ENCODE measurements at regions of chrX and their contacts with region 1.

Region 1: DNA sequence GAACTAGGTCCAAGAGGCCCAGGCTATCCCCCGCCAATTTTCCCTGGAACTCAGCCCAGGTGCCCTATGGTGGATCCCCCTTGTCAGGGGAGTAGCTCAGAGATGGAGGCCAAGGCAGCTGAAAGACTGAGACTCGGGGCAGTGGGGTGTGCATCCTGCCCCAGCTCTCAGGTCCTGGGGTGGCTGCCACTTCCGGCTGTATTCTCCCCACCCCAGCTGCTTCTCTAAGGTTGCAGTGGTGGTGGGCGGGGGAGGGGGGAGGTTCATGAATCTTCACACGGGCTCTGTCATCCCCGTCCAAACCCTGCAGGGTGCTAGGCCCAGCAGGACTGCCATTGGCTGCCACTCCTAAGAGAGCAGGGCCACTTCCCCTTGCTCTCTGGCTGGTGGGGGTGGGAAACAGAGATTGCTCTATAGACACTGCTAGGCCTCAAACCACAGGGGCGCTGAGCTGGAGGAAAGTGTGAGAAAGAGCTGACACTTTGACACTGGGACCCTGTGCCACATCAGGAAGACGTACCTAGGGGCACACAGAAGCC is 1.5 kb downstream of the SASH3 start:
- DNase-seq: peak; percentile 77 to 93 (median 83)
- H3K4me3 ChIP-seq: peak overlapping the region; percentile 75 to 86
- H3K4me3 Mint-ChIP-seq: peak overlapping the region; percentile 81 to 97 (median 88)
- H3K27ac ChIP-seq: peak overlapping the region; percentile 62
- H3K27ac Mint-ChIP-seq: peak overlapping the region; percentile 82 to 95 (median 92)
- H3K4me1 ChIP-seq: peaks cover 74% of the 10 kb centered on the region
- H3K4me1 Mint-ChIP-seq: peaks cover 42 to 89% (median 67%) of the 10 kb centered on the region in 4 donors
- H3K27me3 ChIP-seq: no peaks in the 10 kb centered on the region
- H3K27me3 Mint-ChIP-seq: no peaks in the 10 kb centered on the region

Region 2: GRCh38 chrX:128057421-128057820 is 1723.8 kb before region 1 on chrX:
- CTCF ChIA-PET with region 1: no interaction called
- POLR2A ChIA-PET with region 1: no interaction called
- intact Hi-C with region 1: no loop called
- DNase-seq: no peak
- H3K4me3 ChIP-seq: no peak overlapping the region
- H3K4me3 Mint-ChIP-seq: no peak overlapping the region
- H3K27ac ChIP-seq: no peak overlapping the region
- H3K27ac Mint-ChIP-seq: no peak overlapping the region
- H3K4me1 ChIP-seq: no peaks in the 10 kb centered on the region
- H3K4me1 Mint-ChIP-seq: no peaks in the 10 kb centered on the region
- H3K27me3 ChIP-seq: no peaks in the 10 kb centered on the region
- H3K27me3 Mint-ChIP-seq: no peaks in the 10 kb centered on the region

Region 3: GRCh38 chrX:129726307-129727111 is 54.7 kb before region 1 on chrX:
- CTCF ChIA-PET with region 1: interaction called, 13 read pairs
- POLR2A ChIA-PET with region 1: interaction called, 7 read pairs
- intact Hi-C with region 1: no loop called
- DNase-seq: peak in 2 of 5 donors; percentile 18 to 24
- H3K4me3 ChIP-seq: no peak overlapping the region
- H3K4me3 Mint-ChIP-seq: no peak overlapping the region
- H3K27ac ChIP-seq: no peak overlapping the region
- H3K27ac Mint-ChIP-seq: peak overlapping the region in 2 of 7 donors; percentile 50 to 73
- H3K4me1 ChIP-seq: peaks cover 26% of the 10 kb centered on the region
- H3K4me1 Mint-ChIP-seq: peaks cover 27 to 46% (median 34%) of the 10 kb centered on the region in 4 donors
- H3K27me3 ChIP-seq: no peaks in the 10 kb centered on the region
- H3K27me3 Mint-ChIP-seq: no peaks in the 10 kb centered on the region

Region 4: GRCh38 chrX:129754056-129755024 is 26.9 kb before region 1 on chrX:
- CTCF ChIA-PET with region 1: interaction called, 28 read pairs
- POLR2A ChIA-PET with region 1: interaction called, 1,390 read pairs
- intact Hi-C with region 1: loop called (anchors 1 kb)
- DNase-seq: no peak
- H3K4me3 ChIP-seq: no peak overlapping the region
- H3K4me3 Mint-ChIP-seq: peak overlapping the region in 4 of 8 donors; percentile 9 to 62 (median 28)
- H3K27ac ChIP-seq: no peak overlapping the region
- H3K27ac Mint-ChIP-seq: peak overlapping the region; percentile 20 to 86 (median 66)
- H3K4me1 ChIP-seq: peaks cover 51% of the 10 kb centered on the region
- H3K4me1 Mint-ChIP-seq: peaks cover 23 to 63% (median 44%) of the 10 kb centered on the region in 4 donors
- H3K27me3 ChIP-seq: no peaks in the 10 kb centered on the region
- H3K27me3 Mint-ChIP-seq: no peaks in the 10 kb centered on the region

Region 5: DNA sequence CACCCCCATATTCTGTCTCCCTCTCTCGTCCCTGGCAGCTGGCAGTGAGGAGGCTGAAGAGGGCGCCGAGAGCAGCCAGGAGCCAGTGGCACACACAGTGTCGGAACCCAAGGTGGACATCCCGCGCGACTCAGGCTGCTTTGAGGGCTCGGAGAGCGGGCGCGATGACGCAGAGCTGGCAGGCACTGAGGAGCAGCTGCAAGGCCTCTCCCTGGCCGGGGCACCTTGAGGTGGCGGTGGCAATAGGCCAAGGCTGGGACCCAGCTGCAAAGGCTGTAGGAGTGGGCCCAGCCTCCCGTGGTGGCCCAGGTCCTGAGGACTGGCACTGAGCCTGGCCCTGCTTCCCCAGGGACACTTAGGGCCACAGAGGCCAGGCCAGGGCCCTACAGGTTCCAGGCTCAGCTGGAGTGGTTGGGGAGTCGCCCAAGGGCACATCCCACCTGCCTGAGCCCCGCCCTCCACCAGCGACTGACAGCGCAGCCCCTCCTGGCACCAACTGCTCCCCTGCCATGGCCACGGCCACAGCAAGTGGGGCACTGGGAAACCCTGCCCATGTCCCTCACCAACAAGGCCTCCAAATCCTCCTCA is 12.5 kb after region 1 on chrX:
- CTCF ChIA-PET with region 1: interaction called, 12 read pairs
- POLR2A ChIA-PET with region 1: interaction called, 1,390 read pairs
- intact Hi-C with region 1: loop called (anchors 2 kb)
- DNase-seq: no peak
- H3K4me3 ChIP-seq: no peak overlapping the region
- H3K4me3 Mint-ChIP-seq: no peak overlapping the region
- H3K27ac ChIP-seq: no peak overlapping the region
- H3K27ac Mint-ChIP-seq: peak overlapping the region in 1 of 7 donors; percentile 57
- H3K4me1 ChIP-seq: peaks cover 6% of the 10 kb centered on the region
- H3K4me1 Mint-ChIP-seq: peaks cover 2 to 15% (median 7%) of the 10 kb centered on the region in 4 donors
- H3K27me3 ChIP-seq: no peaks in the 10 kb centered on the region
- H3K27me3 Mint-ChIP-seq: no peaks in the 10 kb centered on the region

Measured in CD4-positive, alpha-beta memory T cell (primary cell).